Activated naive CD4-positive, alpha-beta T cell treated with anti-CD3 and anti-CD28 coated beads, Interleukin-2, amount 10 ng/mL, durations not matched to agents 7 days and 5 days (primary cell): ENCODE measurements at regions of chr17 and their contacts with region 1.

Region 1: DNA sequence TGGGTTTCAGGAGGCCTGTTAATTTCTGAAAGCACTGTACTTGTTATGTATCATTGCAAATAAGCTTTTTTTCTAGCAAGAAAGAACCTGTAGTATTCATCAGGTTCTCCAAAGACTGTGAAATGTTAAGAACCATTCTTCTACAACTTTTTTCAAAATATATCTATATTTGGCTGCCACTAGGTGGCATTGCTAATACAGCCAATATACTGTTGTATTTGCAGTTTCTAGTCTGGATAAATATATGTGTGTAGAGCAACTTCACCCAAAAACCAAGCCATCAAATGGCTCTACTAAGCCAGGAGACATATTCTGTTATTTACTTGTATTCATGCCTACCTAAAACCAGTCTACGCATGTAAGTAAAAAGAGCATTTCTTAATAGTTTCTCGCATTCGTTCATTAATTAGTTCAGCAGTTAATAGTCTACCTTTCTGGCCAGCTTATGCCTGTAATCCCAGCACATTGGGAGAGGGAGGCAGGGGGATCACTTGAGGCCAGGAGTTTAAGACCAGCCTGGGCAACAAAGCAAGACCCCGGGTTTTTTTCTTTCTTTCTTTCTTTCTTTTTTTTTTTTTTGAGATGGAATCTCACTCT is 39.5 kb downstream of the VMP1 start:
- DNase-seq: no peak
- H3K4me3 Mint-ChIP-seq: no peak overlapping the region
- H3K27ac Mint-ChIP-seq: no peak overlapping the region
- H3K4me1 Mint-ChIP-seq: peaks cover 18% of the 10 kb centered on the region
- H3K27me3 Mint-ChIP-seq: no peaks in the 10 kb centered on the region

Region 2: GRCh38 chr17:59734226-59734625 is 12.7 kb before region 1 on chr17:
- CTCF ChIA-PET with region 1: interaction called, 10 read pairs
- DNase-seq: no peak
- H3K4me3 Mint-ChIP-seq: no peak overlapping the region
- H3K27ac Mint-ChIP-seq: no peak overlapping the region
- H3K4me1 Mint-ChIP-seq: peaks cover 6% of the 10 kb centered on the region
- H3K27me3 Mint-ChIP-seq: no peaks in the 10 kb centered on the region

Region 3: DNA sequence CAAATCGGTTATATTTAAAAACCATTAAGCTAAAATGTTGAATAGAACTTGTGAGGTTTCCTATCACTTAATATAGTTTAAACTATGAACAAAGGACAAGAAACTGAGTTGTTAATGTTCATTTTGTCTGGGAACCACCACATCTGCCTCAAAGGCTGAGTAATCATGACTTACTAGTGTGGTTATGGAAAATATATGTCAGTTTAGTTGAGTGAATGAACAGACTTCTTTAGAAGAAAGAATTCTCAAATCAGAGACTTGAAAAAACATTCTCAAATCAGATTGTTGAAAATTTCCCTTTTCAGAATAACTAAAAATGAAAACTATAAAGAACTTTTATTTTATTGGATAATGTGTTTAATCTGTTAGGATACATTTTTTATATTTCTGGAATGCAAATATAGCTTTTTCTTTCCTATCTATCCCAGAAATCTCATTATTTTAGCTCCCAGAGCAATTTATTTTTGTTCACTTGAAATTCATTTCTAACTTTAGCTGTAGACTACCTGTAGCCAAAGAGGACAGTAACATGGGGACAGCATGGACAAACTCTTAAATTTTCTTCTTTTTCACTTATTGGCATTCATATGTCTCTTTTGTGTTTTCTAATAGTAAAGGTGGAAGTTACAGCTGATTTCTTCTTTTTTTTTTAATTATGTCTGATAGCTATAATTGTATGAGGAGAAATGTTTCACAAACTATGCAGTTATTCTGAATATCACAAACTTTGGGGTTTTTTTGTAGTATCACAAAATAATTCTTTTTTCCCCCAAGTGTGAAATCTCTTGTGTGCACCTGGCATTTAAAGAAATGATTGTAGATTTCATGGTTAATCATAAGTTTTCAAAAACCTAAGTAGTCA is 15.8 kb after region 1 on chr17:
- CTCF ChIA-PET with region 1: no interaction called
- DNase-seq: no peak
- H3K4me3 Mint-ChIP-seq: no peak overlapping the region
- H3K27ac Mint-ChIP-seq: peak overlapping the region; percentile 16
- H3K4me1 Mint-ChIP-seq: peaks cover 49% of the 10 kb centered on the region
- H3K27me3 Mint-ChIP-seq: no peaks in the 10 kb centered on the region

Region 4: DNA sequence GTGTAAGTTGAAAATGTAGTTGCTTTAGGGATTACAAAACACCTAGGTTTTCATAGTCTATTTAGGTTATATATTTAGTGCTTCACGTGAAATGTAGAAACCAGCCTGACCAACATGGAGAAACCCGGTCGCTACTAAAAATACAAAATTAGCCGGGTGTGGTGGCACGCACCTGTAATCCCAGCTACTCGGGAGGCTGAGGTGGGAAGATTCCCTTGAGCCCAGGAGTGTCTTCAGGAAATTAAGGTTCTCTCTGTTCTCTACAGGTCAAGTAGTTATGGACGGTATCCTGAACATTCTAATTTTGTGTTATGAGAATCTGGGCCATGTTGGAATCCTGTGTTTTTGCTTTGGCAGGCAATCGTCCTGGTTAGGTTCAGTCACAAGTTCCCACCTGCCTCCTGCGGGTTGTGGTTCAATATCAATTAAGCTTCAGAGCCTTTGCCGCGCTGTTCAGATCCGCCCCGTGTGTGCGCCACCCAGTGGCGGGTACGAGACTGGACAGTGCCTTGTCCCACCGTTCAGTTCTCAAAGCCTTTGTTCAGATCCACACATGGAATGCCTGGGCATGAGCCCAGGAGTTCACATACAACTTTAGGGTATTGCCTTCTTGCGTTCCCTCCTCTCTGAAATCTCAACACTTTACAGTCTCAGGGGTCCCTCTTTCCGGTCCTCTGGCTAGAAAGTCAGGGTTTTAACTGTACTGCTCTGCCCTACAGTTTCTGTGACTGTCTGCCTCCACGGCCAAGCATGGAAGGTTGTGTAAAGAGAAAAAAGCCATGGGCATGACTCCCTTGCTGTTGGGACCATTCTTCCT is 290.1 kb after region 1 on chr17:
- CTCF ChIA-PET with region 1: interaction called, 10 read pairs
- DNase-seq: peak; percentile 77
- H3K4me3 Mint-ChIP-seq: no peak overlapping the region
- H3K27ac Mint-ChIP-seq: no peak overlapping the region
- H3K4me1 Mint-ChIP-seq: peaks cover 4% of the 10 kb centered on the region
- H3K27me3 Mint-ChIP-seq: peaks cover 29% of the 10 kb centered on the region